Head of caudate nucleus (tissue), 42 donors: ENCODE measurements at regions of chr6 and their contacts with region 1.

Region 1: DNA sequence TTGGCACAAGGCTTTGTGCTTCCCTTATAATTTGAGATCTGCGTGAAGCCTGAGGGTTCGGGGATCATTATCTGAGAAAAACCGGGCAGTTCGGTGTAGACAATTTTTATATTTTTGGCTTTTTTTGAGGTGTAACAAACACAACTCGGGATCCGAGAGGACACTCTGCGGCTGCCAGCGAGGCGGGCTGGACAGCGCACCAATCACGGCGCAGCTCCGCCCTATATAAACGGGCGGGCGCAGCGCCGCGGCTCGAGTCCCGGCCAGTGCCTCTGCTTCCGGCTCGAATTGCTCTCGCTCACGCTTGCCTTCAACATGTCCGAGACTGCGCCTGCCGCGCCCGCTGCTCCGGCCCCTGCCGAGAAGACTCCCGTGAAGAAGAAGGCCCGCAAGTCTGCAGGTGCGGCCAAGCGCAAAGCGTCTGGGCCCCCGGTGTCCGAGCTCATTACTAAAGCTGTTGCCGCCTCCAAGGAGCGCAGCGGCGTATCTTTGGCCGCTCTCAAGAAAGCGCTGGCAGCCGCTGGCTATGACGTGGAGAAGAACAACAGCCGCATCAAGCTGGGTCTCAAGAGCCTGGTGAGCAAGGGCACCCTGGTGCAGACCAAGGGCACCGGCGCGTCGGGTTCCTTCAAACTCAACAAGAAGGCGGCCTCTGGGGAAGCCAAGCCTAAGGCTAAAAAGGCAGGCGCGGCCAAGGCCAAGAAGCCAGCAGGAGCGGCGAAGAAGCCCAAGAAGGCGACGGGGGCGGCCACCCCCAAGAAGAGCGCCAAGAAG is 69.0 kb downstream of the HFE start:
- DNase-seq: peak; percentile 83 to 95 (median 91)

Region 2: GRCh38 chr6:26086211-26086610 is 70.1 kb before region 1 on chr6:
- intact Hi-C with region 1: no loop called
- DNase-seq: no peak

Region 3: GRCh38 chr6:26123947-26124780 is 32.1 kb before region 1 on chr6:
- intact Hi-C with region 1: loop called (anchors 2 kb)
- DNase-seq: peak in 39 of 42 donors; percentile 29 to 94 (median 75)

Region 4: DNA sequence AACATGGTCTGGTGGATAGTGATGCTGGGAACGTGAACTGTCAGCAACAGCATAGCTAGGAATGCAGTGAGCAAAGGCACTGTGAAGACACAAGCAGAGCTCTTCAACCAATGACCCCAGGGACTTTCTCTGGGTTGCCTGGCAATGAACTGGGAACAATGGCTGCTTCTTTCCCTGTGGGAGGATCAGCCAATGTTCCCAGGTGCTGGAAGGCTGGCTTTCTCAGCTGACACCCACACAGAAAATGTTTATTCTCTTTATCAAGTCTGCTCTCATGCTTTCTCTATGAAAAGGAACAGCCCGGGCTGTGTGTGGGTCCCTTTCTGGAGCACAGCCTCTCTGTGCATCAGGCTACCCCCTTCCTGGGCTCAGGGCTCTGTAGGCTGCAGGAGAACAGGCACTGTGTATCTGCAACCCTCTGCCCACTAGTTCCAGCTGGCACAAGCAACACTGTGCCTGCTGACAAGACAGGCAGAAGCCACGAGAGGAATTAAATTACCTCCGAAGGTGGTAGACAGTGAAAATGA is 14.8 kb before region 1 on chr6:
- intact Hi-C with region 1: loop called (anchors 2 kb)
- DNase-seq: peak; percentile 35 to 90 (median 77)

Region 5: GRCh38 chr6:26196846-26197648 is 40.8 kb after region 1 on chr6:
- intact Hi-C with region 1: loop called (anchors 2 kb)
- DNase-seq: peak in 41 of 42 donors; percentile 58 to 93 (median 80)